ENCODE measurements at regions of chr1 and their contacts with region 1.

Region 1: DNA sequence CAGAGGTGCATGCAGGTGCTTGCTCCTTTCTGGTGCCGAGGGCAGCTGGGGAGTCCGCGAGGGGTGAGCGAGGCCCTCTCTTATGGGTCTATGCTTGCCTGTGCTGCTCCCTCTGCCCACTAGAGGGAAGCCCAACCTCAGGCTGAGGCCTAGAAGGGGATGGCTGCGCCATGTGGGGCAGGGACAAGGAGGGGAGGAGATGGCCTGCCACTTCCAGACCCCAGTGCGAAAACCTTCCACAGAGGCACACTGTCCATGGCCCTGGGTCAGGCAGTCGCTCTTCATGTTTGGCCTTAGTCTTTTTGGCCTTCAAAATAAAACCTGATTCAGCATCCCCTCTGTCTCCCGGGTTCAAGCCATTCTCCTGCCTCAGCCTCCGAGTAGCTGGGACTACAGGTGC is 14.0 kb downstream of the RHBG start:
- DNase-seq: peak; percentile 63
- H3K4me3 Mint-ChIP-seq: no peak overlapping the region
- H3K27ac Mint-ChIP-seq: no peak overlapping the region
- H3K4me1 Mint-ChIP-seq: peaks cover 4% of the 10 kb centered on the region
- H3K27me3 Mint-ChIP-seq: peaks cover 16% of the 10 kb centered on the region

Region 2: GRCh38 chr1:156356875-156357534 is 26.0 kb before region 1 on chr1:
- CTCF ChIA-PET with region 1: interaction called, 14 read pairs
- POLR2A ChIA-PET with region 1: no interaction called
- DNase-seq: peak; percentile 76
- H3K4me3 Mint-ChIP-seq: no peak overlapping the region
- H3K27ac Mint-ChIP-seq: no peak overlapping the region
- H3K4me1 Mint-ChIP-seq: peaks cover 6% of the 10 kb centered on the region
- H3K27me3 Mint-ChIP-seq: peaks cover 22% of the 10 kb centered on the region

Region 3: DNA sequence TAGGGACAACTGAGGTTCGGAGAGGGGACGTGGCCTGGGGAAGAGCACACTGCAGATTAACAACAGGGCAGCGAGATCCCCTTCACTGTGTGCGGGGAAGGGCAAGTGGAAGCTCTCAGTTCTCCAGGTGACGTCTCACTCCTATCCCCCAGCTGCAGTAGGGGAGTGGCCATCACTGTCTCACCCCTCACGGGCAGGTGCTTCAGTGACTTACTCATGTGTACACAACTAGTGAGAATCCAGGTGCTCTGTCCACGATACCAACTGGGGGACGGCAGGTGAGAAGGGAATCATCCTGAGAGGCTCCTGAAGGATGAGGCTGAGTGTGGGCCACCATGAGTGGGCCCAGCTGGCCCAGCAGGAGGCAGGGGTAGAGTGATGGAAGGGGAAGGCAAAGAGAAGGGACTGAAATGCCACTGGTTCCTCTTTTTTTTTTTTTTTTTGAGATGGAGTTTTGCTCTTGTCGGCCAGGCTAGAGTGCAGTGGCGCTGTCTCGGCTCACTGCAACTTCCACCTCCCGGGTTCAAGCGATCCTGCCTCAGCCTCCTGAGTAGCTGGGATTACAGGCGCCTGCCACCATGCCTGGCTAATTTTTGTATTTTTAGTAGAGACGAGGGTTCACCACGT is 11.9 kb after region 1 on chr1:
- CTCF ChIA-PET with region 1: interaction called, 12 read pairs
- POLR2A ChIA-PET with region 1: no interaction called
- DNase-seq: no peak
- H3K4me3 Mint-ChIP-seq: no peak overlapping the region
- H3K27ac Mint-ChIP-seq: no peak overlapping the region
- H3K4me1 Mint-ChIP-seq: no peaks in the 10 kb centered on the region
- H3K27me3 Mint-ChIP-seq: peaks cover 6% of the 10 kb centered on the region

Region 4: DNA sequence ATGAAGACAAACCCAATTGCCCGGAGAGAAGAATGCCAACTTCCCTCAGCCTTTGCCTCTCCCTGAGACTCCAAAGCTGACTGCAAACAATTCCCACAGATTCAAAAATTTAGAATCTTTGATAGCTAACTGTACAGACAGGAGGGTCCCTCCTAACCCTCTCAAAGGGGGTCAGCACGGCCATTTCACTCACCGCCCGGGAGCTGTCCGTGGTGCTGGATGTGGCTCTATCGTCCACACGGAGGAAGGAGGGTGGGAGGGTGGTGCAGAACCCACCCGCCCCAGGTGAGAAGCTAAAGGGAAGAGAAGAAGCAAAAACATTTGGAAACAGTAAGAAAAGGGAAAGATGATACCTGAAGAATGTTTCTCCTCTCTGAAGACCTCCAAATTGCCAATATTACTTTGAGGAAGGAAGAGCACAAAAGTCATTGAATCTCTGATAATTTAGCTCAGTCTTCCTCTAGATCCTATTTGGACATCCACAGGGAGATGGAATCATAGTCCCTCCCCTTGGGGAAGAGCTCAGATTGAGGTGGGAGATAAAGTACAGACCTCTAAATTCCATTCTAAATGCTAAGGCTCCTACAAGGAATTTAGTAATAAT is 31.5 kb after region 1 on chr1:
- CTCF ChIA-PET with region 1: interaction called, 15 read pairs
- POLR2A ChIA-PET with region 1: no interaction called
- DNase-seq: peak; percentile 41
- H3K4me3 Mint-ChIP-seq: no peak overlapping the region
- H3K27ac Mint-ChIP-seq: no peak overlapping the region
- H3K4me1 Mint-ChIP-seq: peaks cover 2% of the 10 kb centered on the region
- H3K27me3 Mint-ChIP-seq: peaks cover 55% of the 10 kb centered on the region

Region 5: DNA sequence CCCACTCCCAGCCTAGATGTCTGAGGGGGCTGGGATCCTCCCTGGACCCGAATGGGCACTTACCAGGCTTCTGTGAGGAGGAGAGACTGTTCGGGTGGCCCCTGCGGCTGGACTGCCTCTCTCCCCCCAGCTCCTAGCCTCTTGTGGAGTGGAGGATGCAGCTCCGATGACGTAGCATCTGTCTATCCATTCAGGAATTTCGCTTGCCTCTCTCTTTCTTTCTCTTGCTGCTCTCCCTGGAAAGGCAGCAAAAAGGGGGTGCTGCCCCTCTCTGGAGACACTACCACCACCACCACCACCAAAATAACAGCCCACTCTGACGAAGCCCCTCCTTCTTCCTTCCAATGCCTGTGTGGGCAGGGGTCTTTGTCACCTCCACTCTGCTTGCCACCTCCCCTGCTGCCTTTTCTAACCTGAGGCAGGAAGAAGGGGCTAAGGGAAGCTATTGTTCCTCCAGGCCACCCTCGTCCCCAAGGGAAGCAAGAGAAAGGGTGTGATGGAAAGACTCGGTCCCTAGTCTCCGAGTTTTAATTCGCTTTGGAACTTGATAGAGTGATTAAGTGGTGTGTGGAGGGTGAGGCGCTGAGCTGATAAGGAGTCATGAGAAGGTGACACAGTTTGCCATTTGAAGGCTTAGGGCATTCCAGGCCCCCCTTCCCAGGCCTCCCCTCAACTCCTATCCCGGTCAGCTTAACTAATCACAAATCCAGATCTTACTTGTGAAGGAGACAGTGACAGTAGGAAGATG is 46.5 kb after region 1 on chr1:
- CTCF ChIA-PET with region 1: interaction called, 36 read pairs
- POLR2A ChIA-PET with region 1: no interaction called
- DNase-seq: no peak
- H3K4me3 Mint-ChIP-seq: no peak overlapping the region
- H3K27ac Mint-ChIP-seq: no peak overlapping the region
- H3K4me1 Mint-ChIP-seq: no peaks in the 10 kb centered on the region
- H3K27me3 Mint-ChIP-seq: peaks cover 97% of the 10 kb centered on the region

Region 6: GRCh38 chr1:156445789-156446263 is 62.8 kb after region 1 on chr1:
- CTCF ChIA-PET with region 1: interaction called, 85 read pairs
- POLR2A ChIA-PET with region 1: interaction called, 3 read pairs
- DNase-seq: peak; percentile 79
- H3K4me3 Mint-ChIP-seq: no peak overlapping the region
- H3K27ac Mint-ChIP-seq: no peak overlapping the region
- H3K4me1 Mint-ChIP-seq: peaks cover 8% of the 10 kb centered on the region
- H3K27me3 Mint-ChIP-seq: peaks cover 61% of the 10 kb centered on the region

Region 7: GRCh38 chr1:156461781-156462647 is 79.0 kb after region 1 on chr1:
- CTCF ChIA-PET with region 1: interaction called, 10 read pairs
- POLR2A ChIA-PET with region 1: no interaction called
- DNase-seq: no peak
- H3K4me3 Mint-ChIP-seq: no peak overlapping the region
- H3K27ac Mint-ChIP-seq: no peak overlapping the region
- H3K4me1 Mint-ChIP-seq: peaks cover 19% of the 10 kb centered on the region
- H3K27me3 Mint-ChIP-seq: no peaks in the 10 kb centered on the region

Region 8: DNA sequence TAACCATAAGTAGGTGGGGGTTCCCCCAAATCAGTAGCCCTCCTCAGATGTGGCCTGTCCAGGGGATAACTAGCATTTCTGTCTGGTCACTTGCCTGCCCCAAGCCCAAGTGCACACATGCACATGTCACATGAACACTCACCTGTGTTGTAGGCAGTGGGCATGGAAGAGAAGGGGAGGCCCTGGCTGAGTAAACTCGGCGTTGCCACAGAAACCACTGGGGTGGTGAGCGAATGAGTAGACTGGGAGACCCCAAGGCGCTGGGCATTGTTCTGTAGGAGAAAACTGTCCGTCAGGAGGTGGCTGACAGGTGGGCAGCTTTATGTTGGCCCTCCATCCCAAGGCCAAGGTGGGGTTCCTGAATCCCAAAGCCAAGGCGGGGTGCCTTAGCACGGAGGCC is 91.9 kb after region 1 on chr1:
- CTCF ChIA-PET with region 1: no interaction called
- POLR2A ChIA-PET with region 1: no interaction called
- DNase-seq: no peak
- H3K4me3 Mint-ChIP-seq: no peak overlapping the region
- H3K27ac Mint-ChIP-seq: no peak overlapping the region
- H3K4me1 Mint-ChIP-seq: peaks cover 7% of the 10 kb centered on the region
- H3K27me3 Mint-ChIP-seq: no peaks in the 10 kb centered on the region

Measured in activated CD4-positive, alpha-beta T cell treated with anti-CD3 and anti-CD28 coated beads, Interleukin-2, amount 10 ng/mL, durations not matched to agents 7 days and 5 days (primary cell).